ENCODE measurements at regions of chr2 and their contacts with region 1.

Region 1: DNA sequence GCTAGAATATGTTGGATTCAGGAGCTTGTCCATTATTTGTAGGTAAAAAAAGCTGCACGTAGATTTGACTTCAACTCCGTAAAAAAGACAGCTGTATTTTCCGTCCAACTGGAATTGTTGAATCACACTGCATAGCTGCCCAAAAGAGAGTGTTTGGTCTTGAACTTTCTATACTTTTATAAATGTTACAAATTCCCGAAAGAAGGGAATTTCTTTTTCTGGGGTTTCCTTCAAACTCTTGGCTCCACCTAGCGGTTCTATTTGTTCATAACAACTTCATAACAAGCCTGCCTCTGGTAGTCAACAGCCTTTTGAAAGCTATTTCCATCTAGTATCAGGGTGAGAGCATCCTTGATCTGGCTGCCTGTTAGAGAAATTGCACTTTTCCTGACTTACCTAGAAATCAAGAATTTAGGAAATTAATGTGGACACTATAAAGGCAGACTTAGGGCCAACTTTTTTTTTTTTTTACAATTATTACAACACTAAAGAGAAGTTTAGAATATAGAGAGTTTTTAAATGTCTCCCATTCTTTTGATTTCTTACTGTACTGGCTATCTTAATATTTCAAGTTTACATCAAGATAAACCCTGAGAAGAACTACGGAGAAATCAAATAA is 48.1 kb downstream of the TMEM185B start:
- DNase-seq: peak; percentile 48
- H3K4me3 ChIP-seq: no peak overlapping the region
- H3K27ac ChIP-seq: no peak overlapping the region
- H3K27me3 ChIP-seq: no peaks in the 10 kb centered on the region
- CTCF ChIP-seq: peak; percentile 70

Region 2: DNA sequence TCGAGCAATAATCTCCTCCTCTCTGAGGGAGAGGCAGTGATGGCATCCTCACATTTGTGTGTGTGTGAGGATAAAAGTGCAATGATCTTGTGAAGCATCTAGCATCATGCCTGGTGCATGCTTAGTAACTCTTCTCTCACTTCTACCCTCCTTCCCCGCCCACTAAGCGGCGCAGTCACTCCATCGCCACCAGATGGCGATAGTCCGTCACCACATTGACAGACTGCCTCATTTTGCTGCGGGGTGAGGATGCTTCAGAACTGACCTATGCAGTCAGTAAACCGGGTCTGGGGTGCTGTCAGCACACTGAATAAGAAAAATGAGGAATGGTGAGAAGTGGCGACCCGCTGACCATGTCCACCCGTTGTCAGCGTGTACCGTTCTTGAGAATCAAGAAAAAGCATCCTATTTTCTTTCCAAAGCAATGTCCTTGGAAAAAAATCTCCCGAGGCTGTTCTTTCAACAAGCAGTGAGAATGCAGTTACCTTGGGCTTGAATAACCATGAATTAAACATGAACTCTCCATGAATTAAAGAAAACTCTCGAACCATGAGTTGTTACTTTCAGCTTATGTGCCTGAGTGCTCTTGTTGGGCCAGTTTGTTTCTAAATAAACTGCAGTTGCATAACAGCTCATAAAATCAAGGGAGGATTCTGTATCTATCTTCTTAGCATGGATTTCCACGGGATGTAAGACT is 533.4 kb before region 1 on chr2:
- CTCF ChIA-PET with region 1: interaction called, 33 read pairs
- POLR2A ChIA-PET with region 1: no interaction called
- DNase-seq: peak; percentile 37
- H3K4me3 ChIP-seq: no peak overlapping the region
- H3K27ac ChIP-seq: no peak overlapping the region
- H3K27me3 ChIP-seq: peaks cover 15% of the 10 kb centered on the region
- CTCF ChIP-seq: peak; percentile 98

Region 3: GRCh38 chr2:119753041-119753929 is 421.8 kb before region 1 on chr2:
- CTCF ChIA-PET with region 1: interaction called, 39 read pairs
- POLR2A ChIA-PET with region 1: no interaction called
- DNase-seq: no peak
- H3K4me3 ChIP-seq: no peak overlapping the region
- H3K27ac ChIP-seq: no peak overlapping the region
- H3K27me3 ChIP-seq: no peaks in the 10 kb centered on the region
- CTCF ChIP-seq: peak; percentile 66

Region 4: DNA sequence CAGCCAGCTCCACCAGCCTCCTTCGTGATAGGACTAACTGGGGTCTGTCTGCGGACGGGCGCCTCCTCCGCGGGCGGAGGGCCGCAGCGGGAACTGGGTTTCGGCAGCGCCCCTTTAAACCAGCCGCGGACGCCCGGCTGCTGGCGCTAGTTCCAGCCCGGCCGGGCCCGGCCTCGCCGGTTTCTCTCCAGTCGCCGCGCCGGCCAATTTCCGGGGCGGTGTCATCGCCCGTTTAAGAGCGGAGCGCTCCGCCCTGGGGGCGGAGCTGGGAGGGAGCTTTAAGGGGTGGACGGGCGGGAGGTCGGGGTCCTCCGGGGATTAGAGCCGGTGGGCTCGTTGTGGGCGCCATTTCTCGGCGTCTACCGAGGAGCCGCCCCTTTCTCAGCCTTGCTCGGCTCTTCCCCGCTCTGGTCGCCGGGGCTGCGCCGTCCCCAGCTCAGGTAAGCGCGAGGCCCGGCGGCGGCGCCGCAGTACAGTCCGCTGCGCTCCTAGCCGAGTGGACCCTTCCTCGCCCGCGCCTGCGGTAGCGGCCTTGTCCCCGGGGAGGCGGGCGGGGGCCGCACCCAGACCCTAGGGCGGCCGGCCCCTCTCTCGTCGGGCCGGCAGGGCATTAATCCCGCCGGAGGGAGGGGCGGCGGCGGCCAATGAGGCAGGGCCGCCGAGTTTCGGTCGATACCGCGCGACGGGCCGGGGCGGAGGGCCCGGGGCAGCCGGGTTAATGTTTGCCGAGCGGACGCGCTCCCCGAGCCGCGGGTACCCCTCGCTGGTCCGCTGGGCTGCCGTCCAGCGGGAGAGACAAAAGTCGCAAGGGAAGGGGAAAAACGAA is 162.1 kb before region 1 on chr2 and contains the start of gene EPB41L5:
- CTCF ChIA-PET with region 1: interaction called, 10 read pairs
- POLR2A ChIA-PET with region 1: no interaction called
- DNase-seq: peak; percentile 82
- H3K4me3 ChIP-seq: peak within 1 kb of the TSS; percentile 78
- H3K27ac ChIP-seq: no peak within 1 kb of the TSS
- H3K27me3 ChIP-seq: no peaks in the 10 kb centered on the region
- CTCF ChIP-seq: no peak
- polyA plus RNA-seq, gene EPB41L5: 14.8 and 17.1 TPM in 2 replicates

Region 5: GRCh38 chr2:120132190-120132589 is 42.9 kb before region 1 on chr2:
- CTCF ChIA-PET with region 1: interaction called, 16 read pairs
- POLR2A ChIA-PET with region 1: no interaction called
- DNase-seq: no peak
- H3K4me3 ChIP-seq: no peak overlapping the region
- H3K27ac ChIP-seq: no peak overlapping the region
- H3K27me3 ChIP-seq: no peaks in the 10 kb centered on the region
- CTCF ChIP-seq: no peak

Region 6: GRCh38 chr2:120312861-120313694 is 138.0 kb after region 1 on chr2:
- CTCF ChIA-PET with region 1: interaction called, 19 read pairs
- POLR2A ChIA-PET with region 1: no interaction called
- DNase-seq: peak; percentile 49
- H3K4me3 ChIP-seq: peak overlapping the region; percentile 63
- H3K27ac ChIP-seq: peak overlapping the region; percentile 68
- H3K27me3 ChIP-seq: peaks cover 2% of the 10 kb centered on the region
- CTCF ChIP-seq: peak; percentile 98

Region 7: GRCh38 chr2:120456867-120457266 is 281.8 kb after region 1 on chr2:
- CTCF ChIA-PET with region 1: no interaction called
- POLR2A ChIA-PET with region 1: no interaction called
- DNase-seq: no peak
- H3K4me3 ChIP-seq: no peak overlapping the region
- H3K27ac ChIP-seq: no peak overlapping the region
- H3K27me3 ChIP-seq: peaks cover 4% of the 10 kb centered on the region
- CTCF ChIP-seq: no peak

Region 8: GRCh38 chr2:120749506-120750431 is 574.7 kb after region 1 on chr2:
- CTCF ChIA-PET with region 1: no interaction called
- POLR2A ChIA-PET with region 1: no interaction called
- DNase-seq: no peak
- H3K4me3 ChIP-seq: no peak overlapping the region
- H3K27ac ChIP-seq: no peak overlapping the region
- H3K27me3 ChIP-seq: no peaks in the 10 kb centered on the region
- CTCF ChIP-seq: no peak